ENCODE measurements at regions of chr10 and their contacts with region 1.

Region 1: DNA sequence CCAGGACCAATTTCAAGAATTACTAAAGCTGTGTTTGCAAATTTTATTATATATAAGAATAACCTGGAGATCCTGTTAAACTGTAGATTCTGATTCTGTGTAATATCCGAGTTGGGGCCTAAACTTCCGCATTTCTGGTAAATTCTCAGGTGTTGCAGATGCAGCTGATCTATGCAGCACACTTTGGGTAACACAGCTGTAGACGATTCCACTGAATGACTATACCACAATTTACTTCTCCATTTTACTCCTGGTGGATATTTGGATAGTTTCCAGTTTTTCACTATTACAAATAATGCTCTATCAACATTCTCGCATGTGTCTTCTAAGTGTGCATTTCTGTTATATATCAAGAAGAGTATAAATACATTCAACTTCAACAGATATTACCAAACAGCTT is 7.5 kb downstream of the GDI2 start:
- DNase-seq: no peak
- ATAC-seq: peak; percentile 51
- H3K4me3 Mint-ChIP-seq: no peak overlapping the region
- H3K27ac Mint-ChIP-seq: peak overlapping the region; percentile 37
- H3K4me1 Mint-ChIP-seq: peaks cover 73% of the 10 kb centered on the region
- H3K27me3 Mint-ChIP-seq: no peaks in the 10 kb centered on the region
- CTCF ChIP-seq: no peak

Region 2: GRCh38 chr10:5764422-5765297 is 41.1 kb before region 1 on chr10:
- CTCF ChIA-PET with region 1: no interaction called
- POLR2A ChIA-PET with region 1: no interaction called
- intact Hi-C with region 1: loop called (anchors 5 kb)
- DNase-seq: no peak
- ATAC-seq: no peak
- H3K4me3 Mint-ChIP-seq: no peak overlapping the region
- H3K27ac Mint-ChIP-seq: peak overlapping the region; percentile 24
- H3K4me1 Mint-ChIP-seq: no peaks in the 10 kb centered on the region
- H3K27me3 Mint-ChIP-seq: no peaks in the 10 kb centered on the region
- CTCF ChIP-seq: no peak

Region 3: DNA sequence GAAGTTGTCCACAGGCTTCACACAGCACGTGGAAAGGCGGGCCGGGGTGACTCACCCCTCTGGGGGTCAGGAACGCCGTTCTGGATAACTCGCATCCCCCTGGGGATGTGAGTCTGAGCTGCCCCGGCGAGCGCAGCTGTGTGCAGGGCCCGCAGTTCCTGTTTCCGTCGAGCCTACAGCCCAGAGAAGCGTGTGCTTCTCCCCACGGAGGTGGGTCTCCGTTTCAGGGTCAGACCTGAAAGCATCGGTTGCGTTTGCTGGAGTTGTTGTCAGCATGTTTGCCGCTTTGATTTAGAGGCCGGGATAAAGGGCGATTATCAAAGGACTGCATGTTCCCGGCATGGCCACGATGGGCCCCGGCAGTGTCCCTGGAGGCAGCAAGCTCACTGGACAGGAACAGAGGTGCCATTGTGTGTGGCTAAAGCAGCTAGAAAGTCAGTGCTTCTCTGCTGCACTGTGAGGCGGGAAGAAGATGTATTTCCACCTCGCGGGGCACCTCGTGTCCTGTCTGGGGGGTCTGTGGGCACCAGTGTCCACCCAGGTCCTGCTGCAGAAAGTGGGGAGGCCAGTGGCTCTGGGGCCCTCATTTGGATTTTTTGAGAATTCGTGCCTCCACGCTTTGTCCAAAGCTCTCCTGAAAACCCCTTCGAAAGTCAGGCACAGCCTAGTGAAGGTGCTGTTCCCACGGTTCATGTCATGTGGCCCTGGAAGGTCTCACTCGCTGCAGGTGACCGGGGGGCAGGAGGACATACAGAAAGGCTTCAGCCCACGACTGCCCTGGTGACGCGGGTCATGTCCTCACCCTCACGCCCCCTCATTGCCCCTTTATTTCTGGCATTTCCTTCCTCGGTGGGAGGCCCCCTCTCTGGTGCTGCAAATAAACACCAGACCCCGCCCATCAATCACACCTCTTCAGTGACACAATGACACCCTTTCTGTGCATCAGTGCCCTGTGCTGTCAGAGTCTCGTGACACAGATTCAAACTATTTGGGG is 34.9 kb after region 1 on chr10:
- CTCF ChIA-PET with region 1: no interaction called
- POLR2A ChIA-PET with region 1: interaction called, 17 read pairs
- intact Hi-C with region 1: no loop called
- DNase-seq: peak; percentile 78
- ATAC-seq: peak; percentile 83
- H3K4me3 Mint-ChIP-seq: peak overlapping the region; percentile 84
- H3K27ac Mint-ChIP-seq: peak overlapping the region; percentile 98
- H3K4me1 Mint-ChIP-seq: peaks cover 79% of the 10 kb centered on the region
- H3K27me3 Mint-ChIP-seq: no peaks in the 10 kb centered on the region
- CTCF ChIP-seq: no peak

Measured in activated B cell treated with CpG ODN at 0.5 μM for 24 hours (primary cell).